ENCODE measurements at regions of chr20 and their contacts with region 1.

Region 1: GRCh38 chr20:50594591-50595432 is 84.6 kb downstream of the PTPN1 start:
- DNase-seq: no peak
- H3K4me3 ChIP-seq: no peak overlapping the region
- H3K27ac ChIP-seq: no peak overlapping the region
- H3K4me1 ChIP-seq: peaks cover 0 to 13% (median 8%) of the 10 kb centered on the region in 4 experiments; a peak in 4 of 7 replicates
- H3K27me3 ChIP-seq: no peaks in the 10 kb centered on the region
- CTCF ChIP-seq: no peak
- EP300 ChIP-seq: no peak
- POLR2A ChIP-seq: no peak
- RAD21 ChIP-seq: no peak

Region 2: DNA sequence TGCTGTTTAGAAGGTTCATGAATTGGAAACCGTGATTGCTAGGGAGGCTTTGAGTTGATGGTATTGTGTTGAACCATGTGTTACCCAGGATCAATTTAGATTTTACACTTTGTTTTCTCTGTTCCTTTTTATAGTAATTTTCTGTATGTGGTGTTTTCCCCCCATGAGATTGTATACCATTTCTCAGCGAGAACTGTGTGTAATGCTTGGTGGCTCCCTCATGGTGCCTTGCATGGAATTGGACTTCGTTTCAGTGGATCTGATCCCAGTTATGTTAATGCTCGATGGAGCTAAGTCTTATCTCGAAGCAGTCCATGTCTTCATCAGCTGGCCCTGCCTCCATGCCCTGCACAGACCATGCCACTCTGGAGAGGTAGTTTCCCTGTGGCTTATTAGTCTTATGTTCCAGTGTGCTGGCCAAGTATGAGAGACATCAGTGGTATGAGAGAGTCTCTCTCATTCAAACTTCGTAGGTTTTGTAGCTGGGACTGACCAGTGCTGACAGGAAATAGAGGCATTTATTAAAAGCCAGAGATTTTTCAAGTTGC is 65.9 kb before region 1 on chr20:
- CTCF ChIA-PET with region 1: no interaction called
- POLR2A ChIA-PET with region 1: no interaction called
- DNase-seq: no peak
- H3K4me3 ChIP-seq: no peak overlapping the region
- H3K27ac ChIP-seq: no peak overlapping the region
- H3K4me1 ChIP-seq: peaks cover 0 to 6% (median 2%) of the 10 kb centered on the region in 4 experiments; a peak in 3 of 7 replicates
- H3K27me3 ChIP-seq: no peaks in the 10 kb centered on the region
- CTCF ChIP-seq: no peak
- EP300 ChIP-seq: no peak
- POLR2A ChIP-seq: no peak
- RAD21 ChIP-seq: no peak

Region 3: GRCh38 chr20:50610221-50610620 is 15.4 kb after region 1 on chr20:
- CTCF ChIA-PET with region 1: interaction called, 11 read pairs
- POLR2A ChIA-PET with region 1: interaction called, 3 read pairs
- DNase-seq: no peak
- H3K4me3 ChIP-seq: no peak overlapping the region
- H3K27ac ChIP-seq: no peak overlapping the region
- H3K4me1 ChIP-seq: peaks cover 0 to 8% (median 2%) of the 10 kb centered on the region in 4 experiments; a peak in 3 of 7 replicates
- H3K27me3 ChIP-seq: no peaks in the 10 kb centered on the region
- CTCF ChIP-seq: no peak
- EP300 ChIP-seq: no peak
- POLR2A ChIP-seq: no peak
- RAD21 ChIP-seq: no peak